ENCODE measurements at regions of chr17 and their contacts with region 1.

Region 1: DNA sequence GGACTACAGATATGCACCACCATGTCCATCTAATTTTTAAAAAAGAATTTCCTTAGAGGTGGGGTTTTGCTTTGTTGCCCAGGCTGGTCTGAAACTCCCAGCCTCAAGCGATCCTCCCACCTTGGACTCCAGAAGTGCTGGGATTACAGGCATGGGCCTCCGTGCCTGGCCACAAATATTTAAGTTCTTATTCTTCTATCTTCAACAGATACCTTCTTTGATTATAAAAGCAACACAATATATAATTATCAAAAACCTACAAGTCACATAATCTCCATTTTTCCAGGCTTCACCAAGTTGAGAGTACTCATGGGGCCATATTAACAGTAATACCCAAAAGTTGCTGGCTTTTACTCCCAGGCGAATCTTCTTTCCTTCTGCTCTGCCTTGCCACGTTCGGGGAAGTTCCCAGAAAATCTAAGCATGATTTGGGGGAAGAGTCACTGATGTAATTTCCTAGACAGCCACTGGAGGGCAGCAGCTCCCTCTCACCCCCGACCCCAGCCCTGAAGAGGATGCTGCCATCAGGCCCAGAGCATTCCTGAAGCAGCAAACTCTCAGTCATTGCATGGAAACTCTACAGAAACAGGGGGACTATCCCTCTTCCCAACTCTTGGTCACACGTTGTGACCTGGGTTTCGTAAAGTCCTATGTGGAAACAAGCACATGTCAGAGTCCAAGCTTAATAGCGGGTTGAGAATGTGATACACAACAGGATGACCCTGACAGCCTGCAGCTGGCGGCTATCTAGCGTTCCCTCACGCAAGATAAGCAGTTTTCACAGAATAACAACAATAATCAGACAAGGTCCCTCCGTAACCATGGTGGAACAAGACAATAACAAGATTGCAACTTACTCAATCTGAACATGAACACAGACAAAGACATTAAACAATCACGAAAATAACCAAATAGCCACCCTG is 43.9 kb upstream of the DHX40 start:
- DNase-seq: peak; percentile 43
- ATAC-seq: peak; percentile 71
- H3K4me3 Mint-ChIP-seq: no peak overlapping the region
- H3K27ac Mint-ChIP-seq: no peak overlapping the region
- H3K4me1 Mint-ChIP-seq: peaks cover 4% of the 10 kb centered on the region
- H3K27me3 Mint-ChIP-seq: peaks cover 9% of the 10 kb centered on the region
- CTCF ChIP-seq: peak; percentile 81

Region 2: DNA sequence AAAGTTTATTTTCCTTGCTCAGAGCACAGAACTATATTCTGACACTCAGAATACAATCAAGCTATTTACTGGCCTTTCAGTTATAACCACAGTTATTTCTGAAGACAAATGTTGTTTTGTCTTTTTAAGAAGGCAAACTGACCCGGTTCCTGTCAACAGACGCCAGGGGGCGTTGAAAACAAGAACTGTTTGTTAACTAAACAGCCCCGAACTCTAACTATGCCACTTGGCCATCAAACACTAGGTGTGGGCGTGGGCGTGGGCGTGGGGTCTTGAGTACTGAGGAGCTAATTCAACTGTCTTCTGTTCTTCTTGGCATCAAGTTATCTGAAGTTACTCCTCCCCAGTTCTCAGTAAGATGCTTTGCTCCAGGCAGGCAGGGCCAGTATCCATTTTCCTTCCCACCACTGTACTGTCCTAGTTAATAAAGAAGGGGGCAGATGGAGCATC is 943.8 kb before region 1 on chr17:
- CTCF ChIA-PET with region 1: no interaction called
- POLR2A ChIA-PET with region 1: no interaction called
- intact Hi-C with region 1: no loop called
- DNase-seq: peak; percentile 17
- ATAC-seq: no peak
- H3K4me3 Mint-ChIP-seq: no peak overlapping the region
- H3K27ac Mint-ChIP-seq: no peak overlapping the region
- H3K4me1 Mint-ChIP-seq: no peaks in the 10 kb centered on the region
- H3K27me3 Mint-ChIP-seq: no peaks in the 10 kb centered on the region
- CTCF ChIP-seq: no peak

Region 3: DNA sequence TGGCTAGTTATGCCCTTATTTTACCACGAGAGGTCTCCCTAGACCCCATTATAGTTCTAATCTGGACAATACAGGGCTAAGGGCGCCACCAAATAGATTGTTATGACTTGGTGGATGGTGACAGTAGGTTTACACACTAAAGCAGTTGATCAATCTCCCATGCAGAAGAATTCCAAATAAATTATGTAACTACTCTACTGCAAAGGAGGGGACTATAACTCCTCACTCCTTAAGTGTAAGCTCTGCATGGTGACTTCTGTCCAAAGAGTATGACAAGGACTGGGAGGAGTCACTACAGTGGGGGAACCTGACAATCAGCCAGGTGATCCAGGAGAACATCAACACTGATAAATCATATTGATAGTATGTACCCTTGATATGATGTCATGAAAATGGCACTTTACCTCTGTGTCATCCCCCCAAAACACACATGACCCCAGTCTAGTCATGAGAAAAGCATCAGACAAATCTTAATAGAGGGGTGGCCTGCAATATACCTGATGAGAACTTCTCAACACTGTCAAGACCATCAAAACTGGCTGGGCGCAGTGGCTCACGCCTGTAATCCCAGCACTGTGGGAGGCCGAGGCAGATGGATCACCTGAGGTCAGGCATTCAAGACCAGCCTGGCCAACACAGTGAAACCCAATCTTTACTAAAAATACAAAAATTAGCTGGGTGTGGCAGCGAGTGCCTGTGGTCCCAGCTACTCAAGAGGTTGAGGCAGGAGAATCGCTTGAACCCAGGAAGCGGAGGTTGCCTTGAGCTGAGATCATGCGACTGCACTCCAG is 210.1 kb before region 1 on chr17:
- CTCF ChIA-PET with region 1: interaction called, 10 read pairs
- POLR2A ChIA-PET with region 1: no interaction called
- intact Hi-C with region 1: loop called (anchors 1 kb)
- DNase-seq: no peak
- ATAC-seq: peak; percentile 99
- H3K4me3 Mint-ChIP-seq: no peak overlapping the region
- H3K27ac Mint-ChIP-seq: no peak overlapping the region
- H3K4me1 Mint-ChIP-seq: no peaks in the 10 kb centered on the region
- H3K27me3 Mint-ChIP-seq: no peaks in the 10 kb centered on the region
- CTCF ChIP-seq: peak; percentile 86

Region 4: DNA sequence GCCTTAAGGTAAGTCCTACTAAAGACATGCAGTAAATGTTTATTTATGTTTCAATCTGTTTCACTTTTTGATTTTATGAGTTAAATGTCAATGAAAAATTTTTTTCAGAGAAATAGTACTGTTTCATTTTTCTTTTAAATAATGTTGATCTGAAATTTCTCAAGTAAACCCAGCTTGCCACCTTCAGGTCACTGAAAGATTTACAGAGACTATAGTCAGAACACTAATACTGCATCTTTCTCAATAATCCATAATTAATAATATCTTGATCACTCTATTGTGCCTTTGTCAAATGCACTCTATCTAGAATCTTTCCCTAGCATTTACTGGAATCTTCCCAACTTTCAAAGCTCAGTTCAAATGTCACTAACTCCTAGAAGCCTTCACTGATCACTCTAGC is 37.5 kb after region 1 on chr17:
- CTCF ChIA-PET with region 1: interaction called, 4 read pairs
- POLR2A ChIA-PET with region 1: no interaction called
- intact Hi-C with region 1: loop called (anchors 5 kb)
- DNase-seq: no peak
- ATAC-seq: no peak
- H3K4me3 Mint-ChIP-seq: no peak overlapping the region
- H3K27ac Mint-ChIP-seq: no peak overlapping the region
- H3K4me1 Mint-ChIP-seq: no peaks in the 10 kb centered on the region
- H3K27me3 Mint-ChIP-seq: peaks cover 3% of the 10 kb centered on the region
- CTCF ChIP-seq: no peak

Region 5: DNA sequence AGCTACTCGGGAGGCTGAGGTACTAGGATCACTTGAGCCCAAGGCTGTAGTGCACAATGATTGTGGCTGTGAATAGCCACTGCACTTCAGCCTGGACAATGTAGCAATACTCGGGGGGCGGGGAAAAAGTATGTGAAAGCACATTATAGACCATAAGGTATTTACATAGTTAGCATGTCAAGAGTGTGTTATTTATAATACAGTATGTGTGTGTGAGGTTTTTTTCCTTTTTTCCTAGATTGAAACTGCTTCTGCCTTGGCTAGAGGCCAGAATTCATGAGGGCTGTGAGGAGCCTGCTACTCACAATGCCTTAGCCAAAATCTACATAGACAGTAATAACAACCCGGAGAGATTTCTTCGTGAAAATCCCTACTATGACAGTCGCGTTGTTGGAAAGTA is 155.3 kb after region 1 on chr17:
- CTCF ChIA-PET with region 1: no interaction called
- POLR2A ChIA-PET with region 1: no interaction called
- intact Hi-C with region 1: loop called (anchors 10 kb)
- DNase-seq: no peak
- ATAC-seq: no peak
- H3K4me3 Mint-ChIP-seq: no peak overlapping the region
- H3K27ac Mint-ChIP-seq: no peak overlapping the region
- H3K4me1 Mint-ChIP-seq: peaks cover 29% of the 10 kb centered on the region
- H3K27me3 Mint-ChIP-seq: no peaks in the 10 kb centered on the region
- CTCF ChIP-seq: no peak

Region 6: DNA sequence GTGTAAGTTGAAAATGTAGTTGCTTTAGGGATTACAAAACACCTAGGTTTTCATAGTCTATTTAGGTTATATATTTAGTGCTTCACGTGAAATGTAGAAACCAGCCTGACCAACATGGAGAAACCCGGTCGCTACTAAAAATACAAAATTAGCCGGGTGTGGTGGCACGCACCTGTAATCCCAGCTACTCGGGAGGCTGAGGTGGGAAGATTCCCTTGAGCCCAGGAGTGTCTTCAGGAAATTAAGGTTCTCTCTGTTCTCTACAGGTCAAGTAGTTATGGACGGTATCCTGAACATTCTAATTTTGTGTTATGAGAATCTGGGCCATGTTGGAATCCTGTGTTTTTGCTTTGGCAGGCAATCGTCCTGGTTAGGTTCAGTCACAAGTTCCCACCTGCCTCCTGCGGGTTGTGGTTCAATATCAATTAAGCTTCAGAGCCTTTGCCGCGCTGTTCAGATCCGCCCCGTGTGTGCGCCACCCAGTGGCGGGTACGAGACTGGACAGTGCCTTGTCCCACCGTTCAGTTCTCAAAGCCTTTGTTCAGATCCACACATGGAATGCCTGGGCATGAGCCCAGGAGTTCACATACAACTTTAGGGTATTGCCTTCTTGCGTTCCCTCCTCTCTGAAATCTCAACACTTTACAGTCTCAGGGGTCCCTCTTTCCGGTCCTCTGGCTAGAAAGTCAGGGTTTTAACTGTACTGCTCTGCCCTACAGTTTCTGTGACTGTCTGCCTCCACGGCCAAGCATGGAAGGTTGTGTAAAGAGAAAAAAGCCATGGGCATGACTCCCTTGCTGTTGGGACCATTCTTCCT is 515.5 kb after region 1 on chr17:
- CTCF ChIA-PET with region 1: interaction called, 3 read pairs
- POLR2A ChIA-PET with region 1: no interaction called
- intact Hi-C with region 1: loop called (anchors 2 kb)
- DNase-seq: peak; percentile 56
- ATAC-seq: peak; percentile 94
- H3K4me3 Mint-ChIP-seq: no peak overlapping the region
- H3K27ac Mint-ChIP-seq: no peak overlapping the region
- H3K4me1 Mint-ChIP-seq: peaks cover 4% of the 10 kb centered on the region
- H3K27me3 Mint-ChIP-seq: peaks cover 11% of the 10 kb centered on the region
- CTCF ChIP-seq: no peak